Pancreas (tissue), 10 donors: ENCODE measurements at regions of chr9 and their contacts with region 1.

Region 1: DNA sequence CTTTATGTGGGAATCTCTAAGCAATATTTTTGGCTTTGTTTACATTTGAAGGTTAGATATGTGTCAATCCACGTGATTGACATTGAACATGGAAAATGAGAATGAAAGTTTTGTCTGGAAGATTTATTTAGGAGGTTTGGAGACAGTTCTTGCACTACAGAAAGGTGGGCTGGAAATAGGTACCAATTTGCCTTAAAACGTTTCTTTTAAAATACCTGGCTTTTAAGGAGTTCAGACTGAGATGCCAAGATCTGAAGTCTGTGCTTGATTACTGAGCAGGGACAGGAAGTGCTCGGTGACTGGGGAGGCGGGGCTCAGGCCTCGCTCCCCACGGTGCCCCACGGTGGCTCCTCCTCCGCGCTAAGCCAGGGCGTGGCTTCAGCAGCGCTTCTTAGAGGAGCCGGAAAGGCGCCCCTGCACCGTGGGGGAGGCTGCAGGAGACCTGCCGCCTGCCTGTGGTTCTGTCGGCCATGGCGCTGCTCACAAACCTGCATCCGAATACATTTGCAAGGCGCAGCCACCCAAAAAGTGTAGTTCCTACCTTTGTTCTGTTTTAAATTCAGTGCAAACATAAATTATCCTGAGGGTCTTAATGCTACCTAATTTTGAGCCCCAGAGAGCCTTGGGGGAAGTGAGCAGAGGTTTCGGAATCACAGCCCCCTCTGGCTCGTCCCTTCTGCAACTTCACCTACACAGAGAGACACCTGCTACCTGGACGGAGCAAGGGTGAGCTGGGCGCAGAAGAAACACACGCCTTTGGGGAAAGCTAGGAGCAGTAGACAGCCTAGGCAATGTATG is 49.2 kb downstream of the USP20 start:
- DNase-seq: peak; percentile 88 to 95 (median 90)
- ATAC-seq: peak; percentile 85 to 91 (median 87)
- H3K4me3 ChIP-seq: peak overlapping the region in 3 of 4 donors; percentile 5 to 53 (median 50)
- H3K27ac ChIP-seq: peak overlapping the region; percentile 23 to 74 (median 68)
- H3K4me1 ChIP-seq: peaks cover 4 to 8% (median 6%) of the 10 kb centered on the region in 3 donors
- H3K27me3 ChIP-seq: no peaks in the 10 kb centered on the region
- CTCF ChIP-seq: no peak

Region 2: DNA sequence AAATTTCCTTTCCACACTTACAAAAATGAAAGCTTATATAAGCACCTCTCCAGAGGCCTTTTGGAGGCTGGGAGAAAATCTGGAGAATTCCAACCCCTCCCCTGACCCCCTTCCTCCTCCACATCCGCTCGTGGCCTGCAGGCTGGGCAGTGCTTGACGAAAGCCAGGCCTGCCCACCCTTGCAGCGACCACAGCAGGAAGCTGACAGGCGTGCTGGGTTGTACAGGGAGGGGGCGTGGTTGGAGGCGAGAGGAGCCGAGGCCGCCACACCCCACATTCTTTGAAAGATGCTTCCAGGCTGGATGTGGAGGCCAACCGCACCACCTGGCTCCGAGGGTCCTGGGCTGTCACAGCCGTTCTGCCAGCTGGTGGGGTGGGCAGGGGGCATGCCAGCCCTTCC is 658.6 kb before region 1 on chr9:
- intact Hi-C with region 1: no loop called
- DNase-seq: peak in 3 of 6 donors; percentile 23 to 47 (median 46)
- ATAC-seq: peak in 3 of 4 donors; percentile 52 to 73 (median 60)
- H3K4me3 ChIP-seq: no peak overlapping the region
- H3K27ac ChIP-seq: no peak overlapping the region
- H3K4me1 ChIP-seq: no peaks in the 10 kb centered on the region
- H3K27me3 ChIP-seq: no peaks in the 10 kb centered on the region
- CTCF ChIP-seq: no peak

Region 3: GRCh38 chr9:129656795-129657390 is 227.5 kb before region 1 on chr9:
- intact Hi-C with region 1: no loop called
- DNase-seq: no peak
- ATAC-seq: no peak
- H3K4me3 ChIP-seq: no peak overlapping the region
- H3K27ac ChIP-seq: no peak overlapping the region
- H3K4me1 ChIP-seq: no peaks in the 10 kb centered on the region
- H3K27me3 ChIP-seq: no peaks in the 10 kb centered on the region
- CTCF ChIP-seq: no peak

Region 4: GRCh38 chr9:129954868-129955550 is 70.6 kb after region 1 on chr9:
- intact Hi-C with region 1: no loop called
- DNase-seq: no peak
- ATAC-seq: peak in 2 of 4 donors; percentile 53 to 58
- H3K4me3 ChIP-seq: no peak overlapping the region
- H3K27ac ChIP-seq: no peak overlapping the region
- H3K4me1 ChIP-seq: peaks cover 0 to 3% (median 0%) of the 10 kb centered on the region in 3 donors
- H3K27me3 ChIP-seq: no peaks in the 10 kb centered on the region
- CTCF ChIP-seq: no peak

Region 5: DNA sequence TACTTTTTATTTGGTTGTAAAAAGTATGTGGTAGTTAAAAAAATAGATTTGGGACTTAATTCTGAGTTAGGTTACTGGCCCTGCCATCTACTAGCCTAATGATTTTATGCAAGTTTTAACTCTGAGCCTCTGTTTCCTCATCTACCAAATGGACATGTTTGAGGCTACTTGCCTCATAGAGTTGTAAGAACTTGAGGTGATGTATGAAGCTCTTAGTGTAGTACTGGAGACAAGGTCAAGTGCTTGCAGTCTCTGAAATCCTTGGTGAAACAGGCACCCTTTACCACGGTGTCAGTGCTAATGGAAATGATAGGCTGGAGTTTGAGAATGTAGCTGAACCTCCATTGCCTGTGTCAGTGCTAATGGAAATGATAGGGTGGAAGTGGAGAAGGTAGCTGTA is 184.6 kb after region 1 on chr9:
- intact Hi-C with region 1: loop called in 1 of 3 experiments (anchors 10 kb)
- DNase-seq: no peak
- ATAC-seq: no peak
- H3K4me3 ChIP-seq: no peak overlapping the region
- H3K27ac ChIP-seq: no peak overlapping the region
- H3K4me1 ChIP-seq: peaks cover 0 to 10% (median 0%) of the 10 kb centered on the region in 3 donors
- H3K27me3 ChIP-seq: no peaks in the 10 kb centered on the region
- CTCF ChIP-seq: no peak